GM10248 (cell line): ENCODE measurements at regions of chr4 and their contacts with region 1.

Region 1: GRCh38 chr4:174358829-174359228 is 75.1 kb downstream of the CEP44 start:
- DNase-seq: peak; percentile 48
- CTCF ChIP-seq: no peak

Region 2: GRCh38 chr4:174314274-174314673 is 44.6 kb before region 1 on chr4:
- CTCF ChIA-PET with region 1: no interaction called
- POLR2A ChIA-PET with region 1: no interaction called
- DNase-seq: no peak
- CTCF ChIP-seq: no peak

Region 3: GRCh38 chr4:174377613-174378012 is 18.8 kb after region 1 on chr4:
- CTCF ChIA-PET with region 1: interaction called, 16 read pairs
- POLR2A ChIA-PET with region 1: no interaction called
- DNase-seq: no peak
- CTCF ChIP-seq: no peak